Sciatic nerve (tissue), 2 donors: ENCODE measurements at regions of chr22 and their contacts with region 1.

Region 1: DNA sequence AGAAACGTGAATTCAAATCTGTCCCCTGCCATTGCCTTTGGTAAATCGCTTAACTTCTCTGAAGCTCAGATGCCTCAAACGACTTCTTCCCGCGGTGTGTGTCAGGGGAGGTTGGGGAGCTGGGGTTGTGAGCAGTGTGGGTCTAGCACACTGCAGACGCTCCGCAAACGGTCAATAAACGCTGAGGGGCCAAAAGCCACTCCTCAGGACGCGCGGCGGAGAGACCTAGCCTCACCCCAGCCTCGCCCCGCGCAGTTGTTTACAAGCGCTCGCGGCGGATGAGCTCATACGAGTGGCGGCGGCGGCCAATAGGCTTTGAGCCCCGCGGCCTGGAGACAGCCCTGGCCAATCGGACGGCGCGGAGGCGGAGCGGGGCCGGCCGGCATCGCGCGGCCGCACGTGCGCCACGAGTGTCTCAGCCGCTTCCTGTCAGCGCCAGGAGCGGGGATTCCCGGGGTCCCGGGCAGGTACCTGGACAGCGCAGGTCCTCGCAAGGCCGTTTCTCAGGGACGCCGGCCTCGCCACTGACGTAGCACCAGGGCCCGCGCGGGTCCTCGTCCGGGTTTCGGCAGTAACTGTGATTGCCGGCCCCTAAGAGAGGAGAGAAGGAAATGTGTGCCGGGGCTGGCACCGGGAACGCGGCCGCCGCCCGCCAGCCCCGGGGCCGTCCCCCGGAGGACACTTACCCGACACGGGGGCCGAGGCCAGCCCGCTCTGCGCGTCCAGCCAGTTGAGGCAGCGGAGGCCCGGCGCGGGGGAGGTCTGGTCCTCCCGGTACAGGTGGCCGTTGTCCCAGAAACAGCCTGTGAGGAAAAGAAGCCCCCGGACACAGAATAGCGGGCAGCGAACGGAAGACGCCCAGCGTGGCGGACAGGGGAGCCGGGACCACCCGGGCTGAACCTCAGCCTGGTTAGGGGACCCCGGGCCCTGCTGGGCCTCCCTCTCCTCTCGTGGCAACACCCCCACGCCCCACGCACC is 1.5 kb downstream of the PIK3IP1 start:
- DNase-seq: peak; percentile 97
- ATAC-seq: peak; percentile 95

Region 2: GRCh38 chr22:31321421-31321820 is 30.6 kb after region 1 on chr22:
- intact Hi-C with region 1: loop called (anchors 1 kb)
- DNase-seq: peak; percentile 48
- ATAC-seq: peak; percentile 22

Region 3: GRCh38 chr22:31707519-31707918 is 416.7 kb after region 1 on chr22:
- intact Hi-C with region 1: no loop called
- DNase-seq: no peak
- ATAC-seq: no peak